Stomach (tissue), 19 donors: ENCODE measurements at regions of chr10 and their contacts with region 1.

Region 1: DNA sequence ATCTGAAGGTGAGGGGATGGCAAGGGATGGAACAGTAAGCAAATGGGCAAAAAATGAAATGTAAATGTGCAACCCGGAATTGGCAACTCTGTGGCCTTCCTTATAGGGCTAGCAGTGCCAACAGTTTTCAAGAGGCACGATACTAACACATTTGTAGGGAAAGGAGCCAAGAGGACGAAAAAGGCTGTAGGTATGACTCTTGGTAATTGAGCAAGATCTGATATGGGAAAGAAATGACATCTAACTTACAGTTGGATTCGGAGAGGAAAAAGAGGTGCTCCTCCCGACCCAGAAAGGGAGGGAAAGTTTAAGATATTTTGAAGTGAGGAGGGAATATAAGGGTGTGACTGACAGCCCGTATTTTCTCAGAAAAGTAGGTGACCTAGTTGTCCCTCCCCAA is 2.1 kb upstream of the CREM start:
- DNase-seq: no peak
- H3K4me3 ChIP-seq: no peak overlapping the region
- H3K27ac ChIP-seq: peak overlapping the region in 1 of 5 donors; percentile 21
- H3K4me1 ChIP-seq: peaks cover 5 to 26% (median 19%) of the 10 kb centered on the region in 4 donors
- H3K27me3 ChIP-seq: no peaks in the 10 kb centered on the region
- CTCF ChIP-seq: no peak
- EP300 ChIP-seq: no peak
- POLR2A ChIP-seq: no peak

Region 2: GRCh38 chr10:35218339-35218955 is 93.9 kb after region 1 on chr10:
- intact Hi-C with region 1: loop called (anchors 5 kb)
- DNase-seq: peak; percentile 86 to 95
- H3K4me3 ChIP-seq: no peak overlapping the region
- H3K27ac ChIP-seq: peak overlapping the region in 2 of 5 donors; percentile 32 to 47
- H3K4me1 ChIP-seq: peaks cover 0 to 21% (median 4%) of the 10 kb centered on the region in 4 donors
- H3K27me3 ChIP-seq: peaks cover 0 to 2% (median 0%) of the 10 kb centered on the region in 3 donors
- CTCF ChIP-seq: peak in 5 of 7 experiments; percentile 63 to 86 (median 81)
- EP300 ChIP-seq: no peak
- POLR2A ChIP-seq: no peak